ENCODE measurements at regions of chr1 and their contacts with region 1.

Region 1: GRCh38 chr1:8554956-8555534 is 237.1 kb downstream of the SLC45A1 start:
- DNase-seq: no peak
- H3K4me3 ChIP-seq: no peak overlapping the region
- H3K27ac ChIP-seq: peak overlapping the region in 7 of 59 donors; percentile 2 to 36 (median 8)
- H3K27me3 ChIP-seq: no peaks in the 10 kb centered on the region
- CTCF ChIP-seq: no peak

Region 2: DNA sequence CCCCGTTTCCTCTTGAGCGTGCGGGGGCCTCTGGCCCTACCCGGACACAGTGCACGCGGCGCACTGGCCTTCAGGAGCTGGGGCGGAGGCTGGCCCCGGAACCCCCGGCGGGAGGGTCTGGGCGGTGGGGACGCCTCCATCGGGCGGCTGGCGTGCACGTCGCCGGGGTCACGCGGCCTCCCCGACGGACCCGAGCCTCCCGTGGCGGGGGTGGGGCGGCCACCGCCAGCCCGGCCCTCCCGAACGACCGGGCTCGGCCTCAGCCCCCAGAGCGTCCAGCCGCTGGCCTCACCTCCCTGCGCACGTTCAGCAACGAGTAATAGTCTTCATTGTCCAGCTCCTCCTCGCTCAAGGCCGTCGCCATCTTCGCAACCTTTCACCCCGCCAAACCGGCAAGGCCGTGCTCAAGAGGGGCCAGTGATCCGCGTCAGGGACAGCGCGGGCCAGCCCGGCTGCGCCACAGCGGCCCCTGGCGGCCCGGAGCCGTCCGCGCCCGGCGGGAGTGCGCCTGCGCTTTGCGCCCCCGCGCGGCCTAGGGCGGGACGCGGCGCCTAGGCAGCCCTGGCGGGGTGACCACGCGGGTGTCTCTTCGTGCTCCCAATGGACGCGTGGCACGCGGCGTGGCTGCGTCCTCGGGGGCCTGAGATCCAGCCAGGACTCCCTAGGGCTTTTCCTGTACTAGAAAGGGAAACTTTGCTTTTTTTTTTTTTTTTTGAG is 1853.5 kb before region 1 on chr1 and contains the start of gene DNAJC11:
- intact Hi-C with region 1: no loop called
- DNase-seq: peak; percentile 80 to 94 (median 88)
- H3K4me3 ChIP-seq: peak within 1 kb of the TSS; percentile 67 to 100 (median 98)
- H3K27ac ChIP-seq: peak within 1 kb of the TSS in 57 of 59 donors; percentile 41 to 92 (median 79)
- H3K27me3 ChIP-seq: no peaks in the 10 kb centered on the region
- CTCF ChIP-seq: peak; percentile 39 to 100 (median 86)
- total RNA-seq, gene DNAJC11: 42.4 to 78.3 (median 59.8) TPM

Region 3: GRCh38 chr1:8348777-8349491 is 206.1 kb before region 1 on chr1:
- intact Hi-C with region 1: no loop called
- DNase-seq: peak in 4 of 10 donors; percentile 53 to 75 (median 56)
- H3K4me3 ChIP-seq: no peak overlapping the region
- H3K27ac ChIP-seq: peak overlapping the region in 5 of 59 donors; percentile 18 to 48 (median 27)
- H3K27me3 ChIP-seq: no peaks in the 10 kb centered on the region
- CTCF ChIP-seq: peak; percentile 20 to 93 (median 78)

Region 4: GRCh38 chr1:8727809-8728213 is 172.8 kb after region 1 on chr1:
- intact Hi-C with region 1: loop called (anchors 2 to 5 kb)
- DNase-seq: peak in 4 of 10 donors; percentile 38 to 53 (median 46)
- H3K4me3 ChIP-seq: no peak overlapping the region
- H3K27ac ChIP-seq: peak overlapping the region in 38 of 59 donors; percentile 1 to 63 (median 38)
- H3K27me3 ChIP-seq: no peaks in the 10 kb centered on the region
- CTCF ChIP-seq: peak in 2 of 56 donors; percentile 4 to 5

Measured in dorsolateral prefrontal cortex (tissue), 120 donors.